CD14-positive monocyte (primary cell): ENCODE measurements at regions of chr3 and their contacts with region 1.

Region 1: GRCh38 chr3:149717391-149718056 is 34.8 kb downstream of the COMMD2 start:
- DNase-seq: peak in 2 of 3 donors; percentile 10 to 27
- H3K4me3 ChIP-seq: no peak overlapping the region
- H3K4me3 Mint-ChIP-seq: peak overlapping the region in 1 of 2 donors; percentile 46
- H3K27ac ChIP-seq: no peak overlapping the region
- H3K27ac Mint-ChIP-seq: no peak overlapping the region
- H3K4me1 ChIP-seq: no peaks in the 10 kb centered on the region
- H3K4me1 Mint-ChIP-seq: peaks cover 4% of the 10 kb centered on the region
- H3K27me3 ChIP-seq: peaks cover 0 to 5% of the 10 kb centered on the region in 2 donors
- H3K27me3 Mint-ChIP-seq: peaks cover 11 to 19% (median 12%) of the 10 kb centered on the region in 3 donors
- CTCF ChIP-seq: peak; percentile 75

Region 2: DNA sequence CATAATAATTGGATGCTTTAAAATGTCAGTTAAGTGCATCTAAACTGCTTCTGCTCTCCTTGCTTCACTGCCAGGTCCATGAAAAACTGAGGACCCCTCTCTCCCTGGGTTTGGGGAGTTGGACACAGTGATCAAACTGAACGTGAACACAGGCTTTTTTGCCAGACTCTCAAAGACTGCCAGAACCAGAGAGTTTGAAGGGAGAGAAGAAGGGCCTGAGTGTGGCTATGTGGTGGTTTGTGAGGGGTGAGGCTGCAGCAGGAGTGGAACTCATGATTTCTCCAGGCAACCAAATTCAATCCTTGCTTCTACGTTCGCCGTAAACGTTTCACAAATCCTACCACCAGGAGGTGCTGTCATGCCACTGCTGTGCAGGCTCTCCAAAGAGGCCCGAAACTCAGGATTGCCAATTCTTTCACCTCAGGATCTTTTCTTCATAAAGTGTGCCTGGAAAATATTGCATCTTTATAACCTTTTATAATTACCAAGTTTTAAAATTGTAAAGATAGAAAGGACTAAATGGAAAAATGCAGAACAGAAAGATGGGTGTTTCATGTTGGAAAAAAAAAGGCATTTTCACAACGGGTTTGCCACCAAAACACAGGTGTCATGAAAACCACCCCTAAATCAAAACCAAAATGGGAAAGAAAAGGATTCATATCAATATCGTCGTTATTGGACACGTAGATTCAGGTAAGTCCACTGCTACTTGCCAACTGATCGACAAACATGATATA is 223.3 kb before region 1 on chr3:
- intact Hi-C with region 1: loop called in 1 of 2 experiments (anchors 10 kb)
- DNase-seq: peak; percentile 49 to 66 (median 64)
- H3K4me3 ChIP-seq: no peak overlapping the region
- H3K4me3 Mint-ChIP-seq: no peak overlapping the region
- H3K27ac ChIP-seq: no peak overlapping the region
- H3K27ac Mint-ChIP-seq: no peak overlapping the region
- H3K4me1 ChIP-seq: peaks cover 7 to 10% of the 10 kb centered on the region in 2 donors
- H3K4me1 Mint-ChIP-seq: peaks cover 21% of the 10 kb centered on the region
- H3K27me3 ChIP-seq: peaks cover 6 to 10% of the 10 kb centered on the region in 2 donors
- H3K27me3 Mint-ChIP-seq: peaks cover 9 to 20% (median 11%) of the 10 kb centered on the region in 3 donors
- CTCF ChIP-seq: peak; percentile 89